ENCODE measurements at regions of chr5 and their contacts with region 1.

Region 1: DNA sequence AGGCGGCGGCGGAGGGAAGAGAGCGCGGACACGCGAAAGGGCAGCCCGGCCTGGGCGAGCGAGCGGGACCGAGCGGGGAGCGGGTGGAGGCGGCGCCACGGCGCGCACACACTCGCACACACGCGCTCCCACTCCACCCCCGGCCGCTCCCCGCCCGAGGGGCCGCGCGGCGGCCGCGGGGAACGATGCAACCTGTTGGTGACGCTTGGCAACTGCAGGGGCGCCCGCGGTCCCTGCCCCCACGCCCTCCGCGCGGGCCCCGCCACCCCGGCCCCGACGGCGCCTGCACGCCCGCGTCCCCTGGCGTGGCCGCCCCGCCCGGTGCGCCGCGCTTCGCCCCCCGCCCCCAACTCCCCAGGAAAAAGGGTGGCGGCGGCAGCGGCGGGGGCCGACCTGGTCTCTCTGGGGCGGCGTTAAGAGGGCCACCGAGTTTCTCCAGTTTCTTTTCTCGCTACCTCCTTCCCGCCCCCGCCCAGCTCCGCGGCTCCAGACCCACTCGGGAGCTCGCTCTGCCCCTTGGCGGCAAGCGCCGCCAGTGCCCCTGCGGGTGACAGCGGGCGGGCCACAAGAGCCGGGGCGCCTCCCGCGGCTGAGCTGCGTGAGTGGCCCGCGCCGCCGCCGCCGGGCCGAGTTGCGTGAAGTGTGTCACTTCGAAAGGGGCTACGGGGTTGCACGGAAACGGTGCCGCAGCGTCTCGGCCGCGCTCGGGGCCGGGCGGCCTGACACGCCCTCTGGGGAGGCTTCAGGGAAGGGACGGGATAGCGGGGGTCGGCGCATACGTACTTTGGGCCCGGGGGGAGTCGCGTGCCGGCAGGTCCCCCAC is at the start of gene NR3C1:
- DNase-seq: peak; percentile 90 to 96 (median 92)
- ATAC-seq: peak; percentile 61 to 90 (median 77)
- H3K4me3 ChIP-seq: peak within 1 kb of the TSS; percentile 64 to 95 (median 88)
- H3K27ac ChIP-seq: peak within 1 kb of the TSS; percentile 95 to 100 (median 99)
- H3K4me1 ChIP-seq: peaks cover 0 to 38% (median 19%) of the 10 kb centered on the region in 12 donors
- H3K27me3 ChIP-seq: no peaks in the 10 kb centered on the region
- CTCF ChIP-seq: peak; percentile 38 to 86 (median 65)
- POLR2A ChIP-seq: peak in 1 of 2 donors; percentile 58
- total RNA-seq, gene NR3C1: 29.6 to 73.7 (median 50.6) TPM

Region 2: DNA sequence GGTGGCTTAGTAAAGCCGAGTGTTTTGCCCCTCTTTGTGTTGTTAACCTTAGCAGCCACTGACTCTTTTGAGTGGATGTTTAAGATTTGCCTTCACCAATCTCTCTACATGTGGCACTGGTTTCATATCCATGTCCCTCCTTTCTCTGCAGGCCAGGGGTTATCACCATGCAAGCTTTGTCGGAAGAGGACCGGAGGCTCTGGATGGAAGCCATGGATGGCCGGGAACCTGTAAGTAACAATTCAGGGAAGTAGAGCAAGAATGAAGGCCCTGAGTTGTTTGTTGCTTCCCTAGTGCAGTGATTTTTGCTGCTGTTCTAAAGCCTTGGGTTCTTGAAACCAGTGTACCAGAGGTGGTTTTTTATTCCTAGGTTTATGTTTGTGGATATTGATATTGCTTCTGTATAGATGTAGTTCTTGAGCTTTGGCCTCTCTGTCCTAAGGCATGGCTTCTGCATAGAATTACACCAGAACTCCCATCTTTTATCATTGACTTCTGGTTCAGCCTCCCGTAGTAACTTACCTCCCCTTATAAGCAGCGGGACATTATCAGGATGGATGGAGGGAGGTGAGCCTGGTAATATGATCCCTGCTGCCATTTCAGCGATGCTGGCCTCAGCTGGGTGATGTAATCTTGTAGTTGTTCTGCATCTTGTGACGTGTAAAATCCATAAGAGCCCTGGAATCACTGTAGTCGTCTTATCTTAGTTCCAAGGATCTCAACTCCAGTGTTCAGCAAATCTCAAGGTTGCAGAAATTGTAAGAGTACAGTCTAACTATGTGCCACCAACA is 471.7 kb before region 1 on chr5:
- intact Hi-C with region 1: loop called in 5 of 10 experiments (anchors 5 to 10 kb)
- DNase-seq: peak in 4 of 5 donors; percentile 35 to 58 (median 44)
- ATAC-seq: no peak
- H3K4me3 ChIP-seq: no peak overlapping the region
- H3K27ac ChIP-seq: peak overlapping the region in 11 of 12 donors; percentile 16 to 87 (median 60)
- H3K4me1 ChIP-seq: peaks cover 4 to 90% (median 66%) of the 10 kb centered on the region in 12 donors
- H3K27me3 ChIP-seq: no peaks in the 10 kb centered on the region
- CTCF ChIP-seq: no peak
- POLR2A ChIP-seq: no peak

Region 3: DNA sequence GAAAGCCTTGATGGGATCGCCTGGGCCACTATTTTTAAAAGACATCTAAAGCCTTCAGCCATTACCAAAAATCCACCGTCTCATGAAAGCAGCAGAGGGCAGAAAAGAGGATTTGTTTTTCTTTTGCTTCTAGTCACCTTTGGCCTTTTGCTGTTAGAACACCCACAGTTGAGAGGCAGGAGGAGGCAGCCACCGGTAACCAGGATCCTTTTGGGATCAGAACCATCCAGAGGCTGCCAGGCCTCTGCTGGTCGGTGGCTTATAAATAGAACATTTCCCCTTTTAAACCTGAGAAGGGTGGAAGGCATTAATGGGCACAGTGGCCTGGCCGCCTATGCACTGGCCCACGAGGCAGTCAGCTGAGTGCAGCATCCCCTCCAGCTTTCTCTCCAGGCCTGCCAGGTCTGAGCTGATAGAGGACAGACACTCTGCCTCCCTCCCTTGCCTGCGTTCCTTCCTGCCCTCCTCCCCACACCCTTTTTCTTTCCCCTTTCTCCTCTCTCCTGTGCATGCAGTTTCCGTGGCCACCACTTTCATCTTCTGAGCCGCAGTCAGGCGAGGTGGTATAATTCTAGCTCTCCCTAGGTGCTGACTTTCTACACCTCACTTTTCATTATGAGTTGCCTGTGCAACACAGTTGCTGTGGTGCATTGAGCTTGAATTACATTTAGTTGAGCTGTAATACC is 380.2 kb before region 1 on chr5:
- intact Hi-C with region 1: loop called in 2 of 10 experiments (anchors 5 kb)
- DNase-seq: peak; percentile 63 to 89 (median 80)
- ATAC-seq: peak; percentile 95 to 97 (median 96)
- H3K4me3 ChIP-seq: no peak overlapping the region
- H3K27ac ChIP-seq: peak overlapping the region; percentile 34 to 83 (median 66)
- H3K4me1 ChIP-seq: peaks cover 0 to 51% (median 24%) of the 10 kb centered on the region in 12 donors
- H3K27me3 ChIP-seq: no peaks in the 10 kb centered on the region
- CTCF ChIP-seq: peak in 3 of 12 donors; percentile 11 to 30 (median 15)
- POLR2A ChIP-seq: no peak

Region 4: DNA sequence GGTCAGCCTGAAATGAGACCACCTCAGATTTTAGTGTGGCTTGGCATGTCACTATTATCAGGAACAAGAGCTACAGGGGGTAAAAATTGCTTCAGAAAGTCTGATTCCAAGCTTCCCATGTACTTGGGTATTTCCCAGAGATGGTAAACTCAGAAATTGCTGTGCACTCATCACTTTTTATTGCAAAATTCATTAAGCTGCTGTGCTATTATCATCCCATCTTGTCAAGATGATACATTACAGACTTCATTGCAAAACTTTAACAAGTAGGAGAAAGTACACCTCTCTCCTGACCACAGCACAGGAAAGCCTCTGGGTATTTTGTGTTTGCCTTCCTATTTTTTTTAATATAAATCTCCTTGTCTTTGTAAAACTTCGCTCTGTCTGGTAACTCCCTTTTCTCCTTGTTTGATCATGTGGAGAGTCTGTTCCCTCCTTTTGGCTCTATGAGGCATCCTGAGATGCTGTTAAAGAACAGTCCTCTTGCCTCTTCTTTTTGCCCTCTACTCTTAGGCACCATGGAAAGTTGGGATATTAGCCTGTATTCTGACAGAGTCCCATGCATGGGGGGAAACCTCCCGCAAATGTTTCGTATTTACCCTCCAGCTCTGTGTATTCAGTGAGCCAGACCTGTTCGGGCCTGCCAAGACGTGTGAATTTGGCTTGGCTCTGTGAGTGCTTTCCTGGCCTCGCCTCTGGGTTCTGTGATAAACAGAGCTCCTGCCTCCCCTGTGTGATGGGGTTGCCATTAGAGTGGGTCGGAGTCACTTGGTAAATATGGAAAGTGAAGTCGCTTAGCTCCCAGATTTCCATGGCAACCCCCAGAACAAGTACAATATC is 261.0 kb before region 1 on chr5:
- intact Hi-C with region 1: loop called in 3 of 10 experiments (anchors 10 kb)
- DNase-seq: peak in 4 of 5 donors; percentile 65 to 80 (median 73)
- ATAC-seq: peak; percentile 70 to 93 (median 88)
- H3K4me3 ChIP-seq: no peak overlapping the region
- H3K27ac ChIP-seq: peak overlapping the region in 10 of 12 donors; percentile 23 to 74 (median 52)
- H3K4me1 ChIP-seq: peaks cover 2 to 76% (median 39%) of the 10 kb centered on the region in 12 donors
- H3K27me3 ChIP-seq: no peaks in the 10 kb centered on the region
- CTCF ChIP-seq: no peak
- POLR2A ChIP-seq: no peak

Region 5: DNA sequence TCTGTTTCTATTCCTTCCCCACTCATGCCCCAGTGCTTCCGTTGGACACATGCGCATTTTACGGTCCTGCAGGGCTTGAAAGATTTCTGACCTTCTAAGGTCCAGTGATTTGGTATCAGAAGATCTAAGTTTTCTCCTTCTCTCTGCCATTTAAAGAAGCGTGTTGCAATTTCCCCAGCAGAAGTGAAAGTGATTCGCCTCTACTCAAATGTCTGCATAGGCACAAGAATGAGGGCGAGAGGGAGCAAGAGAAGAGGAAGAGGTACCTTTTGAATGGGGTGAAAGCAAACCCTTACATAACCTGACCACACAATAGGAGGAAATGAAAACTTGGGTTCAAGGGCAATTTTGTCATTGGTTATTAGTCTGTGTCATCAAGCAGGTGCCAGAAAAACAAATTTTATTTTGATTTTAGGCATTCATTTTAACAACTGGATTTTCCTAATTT is 31.4 kb after region 1 on chr5:
- intact Hi-C with region 1: no loop called
- DNase-seq: peak in 3 of 5 donors; percentile 17 to 28 (median 22)
- ATAC-seq: peak in 3 of 4 donors; percentile 60 to 77 (median 70)
- H3K4me3 ChIP-seq: peak overlapping the region in 8 of 12 donors; percentile 4 to 43 (median 21)
- H3K27ac ChIP-seq: peak overlapping the region in 5 of 12 donors; percentile 5 to 82 (median 39)
- H3K4me1 ChIP-seq: peaks cover 0 to 26% (median 5%) of the 10 kb centered on the region in 12 donors
- H3K27me3 ChIP-seq: no peaks in the 10 kb centered on the region
- CTCF ChIP-seq: no peak
- POLR2A ChIP-seq: no peak

Region 6: GRCh38 chr5:143495821-143496275 is 92.0 kb after region 1 on chr5:
- intact Hi-C with region 1: loop called in 1 of 10 experiments (anchors 5 kb)
- DNase-seq: peak in 3 of 5 donors; percentile 23 to 42 (median 40)
- ATAC-seq: peak; percentile 59 to 80 (median 68)
- H3K4me3 ChIP-seq: no peak overlapping the region
- H3K27ac ChIP-seq: peak overlapping the region in 8 of 12 donors; percentile 11 to 58 (median 18)
- H3K4me1 ChIP-seq: peaks cover 0 to 43% (median 16%) of the 10 kb centered on the region in 12 donors
- H3K27me3 ChIP-seq: no peaks in the 10 kb centered on the region
- CTCF ChIP-seq: no peak
- POLR2A ChIP-seq: no peak

Region 7: GRCh38 chr5:143592648-143593047 is 188.8 kb after region 1 on chr5:
- intact Hi-C with region 1: no loop called
- DNase-seq: no peak
- ATAC-seq: peak in 1 of 4 donors; percentile 33
- H3K4me3 ChIP-seq: no peak overlapping the region
- H3K27ac ChIP-seq: no peak overlapping the region
- H3K4me1 ChIP-seq: peaks cover 0 to 25% (median 6%) of the 10 kb centered on the region in 12 donors
- H3K27me3 ChIP-seq: no peaks in the 10 kb centered on the region
- CTCF ChIP-seq: no peak
- POLR2A ChIP-seq: no peak

Region 8: GRCh38 chr5:144004146-144004545 is 600.3 kb after region 1 on chr5:
- intact Hi-C with region 1: no loop called
- DNase-seq: no peak
- ATAC-seq: no peak
- H3K4me3 ChIP-seq: no peak overlapping the region
- H3K27ac ChIP-seq: no peak overlapping the region
- H3K4me1 ChIP-seq: no peaks in the 10 kb centered on the region
- H3K27me3 ChIP-seq: no peaks in the 10 kb centered on the region
- CTCF ChIP-seq: no peak
- POLR2A ChIP-seq: no peak

Region 9: GRCh38 chr5:144142139-144142823 is 738.5 kb after region 1 on chr5:
- intact Hi-C with region 1: loop called in 2 of 10 experiments (anchors 5 to 10 kb)
- DNase-seq: no peak
- ATAC-seq: peak; percentile 51 to 77 (median 62)
- H3K4me3 ChIP-seq: no peak overlapping the region
- H3K27ac ChIP-seq: no peak overlapping the region
- H3K4me1 ChIP-seq: peaks cover 0 to 34% (median 11%) of the 10 kb centered on the region in 12 donors
- H3K27me3 ChIP-seq: no peaks in the 10 kb centered on the region
- CTCF ChIP-seq: peak; percentile 36 to 78 (median 64)
- POLR2A ChIP-seq: no peak

Measured in heart left ventricle (tissue), 16 donors.